ENCODE measurements at regions of chr20 and their contacts with region 1.

Region 1: DNA sequence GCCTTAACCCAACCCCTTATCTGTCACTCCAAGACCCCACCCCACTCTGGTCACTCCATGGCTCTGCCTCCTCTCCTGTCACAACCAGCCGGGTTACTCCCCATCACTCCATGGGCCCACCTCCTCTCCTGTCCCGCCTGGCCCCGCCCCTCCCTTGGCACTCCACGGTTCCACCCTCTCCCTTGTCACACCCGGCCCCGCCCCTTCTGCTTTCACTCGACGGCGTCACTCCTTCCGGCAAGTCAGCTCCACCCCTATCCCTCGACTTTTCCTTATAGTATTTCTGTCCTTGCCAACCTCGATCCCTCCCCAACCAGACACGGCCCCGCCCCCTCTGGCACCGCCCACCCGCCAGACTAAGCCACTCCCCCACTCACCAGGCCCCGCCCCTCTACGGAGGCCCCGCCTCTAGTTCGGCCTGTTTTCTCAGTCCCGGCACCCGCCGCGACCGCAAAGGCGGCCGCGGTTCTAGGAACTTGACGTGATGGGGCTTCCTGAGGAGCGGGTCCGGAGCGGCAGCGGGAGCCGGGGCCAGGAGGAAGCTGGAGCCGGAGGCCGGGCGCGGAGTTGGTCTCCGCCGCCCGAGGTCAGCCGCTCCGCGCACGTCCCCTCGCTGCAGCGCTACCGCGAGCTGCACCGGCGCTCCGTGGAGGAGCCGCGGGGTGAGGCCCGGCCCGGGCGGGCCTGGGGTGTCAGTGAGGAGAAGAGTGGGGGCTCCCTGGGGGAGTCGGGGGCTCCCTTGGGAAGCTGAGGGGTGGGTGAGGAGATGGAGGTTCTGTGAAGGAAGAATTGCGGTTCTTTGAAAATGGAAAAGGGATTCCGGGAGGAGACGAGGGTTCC is at the start of gene ACSS2:
- DNase-seq: peak; percentile 98 to 100
- H3K4me3 ChIP-seq: peak within 1 kb of the TSS; percentile 54 to 87
- H3K27ac ChIP-seq: peak within 1 kb of the TSS; percentile 83 to 84
- H3K4me1 ChIP-seq: peaks cover 0 to 5% of the 10 kb centered on the region in 2 donors
- H3K27me3 ChIP-seq: no peaks in the 10 kb centered on the region
- CTCF ChIP-seq: peak in 2 of 4 experiments; percentile 22 to 33
- POLR2A ChIP-seq: peak; percentile 77 to 96
- total RNA-seq, gene ACSS2: 18.8 to 138 (median 48.7) TPM

Region 2: DNA sequence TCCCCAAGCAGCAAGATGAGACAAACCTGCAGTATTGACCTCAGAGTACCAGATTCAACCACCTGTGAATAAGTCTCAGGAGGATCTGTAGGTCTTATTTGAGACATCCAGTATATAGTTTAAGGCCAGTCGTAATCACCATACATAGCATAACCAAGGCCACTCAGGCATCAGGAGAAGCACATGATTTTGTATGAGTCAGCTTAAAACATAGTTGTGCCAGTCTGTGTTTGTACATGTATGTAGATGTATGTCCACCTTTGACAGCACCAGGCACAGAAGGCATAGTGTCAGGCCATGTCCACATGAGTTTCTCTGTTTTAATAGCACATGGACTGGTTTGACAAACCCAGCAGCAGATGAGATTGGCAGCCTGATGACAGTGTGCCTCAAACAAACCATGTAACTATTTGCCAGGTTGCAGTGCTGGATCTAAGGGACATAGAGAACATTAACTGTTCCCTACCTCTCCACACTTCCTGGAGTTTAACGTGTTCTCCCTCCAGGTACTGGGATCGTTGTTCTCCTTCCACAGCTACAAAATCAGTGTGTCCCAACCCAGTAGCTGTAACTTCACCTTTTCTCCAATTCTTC is 643.8 kb before region 1 on chr20:
- intact Hi-C with region 1: no loop called
- DNase-seq: no peak
- H3K4me3 ChIP-seq: no peak overlapping the region
- H3K27ac ChIP-seq: no peak overlapping the region
- H3K4me1 ChIP-seq: no peaks in the 10 kb centered on the region
- H3K27me3 ChIP-seq: no peaks in the 10 kb centered on the region
- CTCF ChIP-seq: no peak
- POLR2A ChIP-seq: no peak

Region 3: GRCh38 chr20:34955232-34956040 is 79.1 kb after region 1 on chr20 and contains the starts of genes GSS and MYH7B:
- intact Hi-C with region 1: loop called (anchors 5 kb)
- DNase-seq: peak; percentile 97 to 99
- H3K4me3 ChIP-seq: peak within 1 kb of the TSS; percentile 64 to 84
- H3K27ac ChIP-seq: peak within 1 kb of the TSS; percentile 91 to 92
- H3K4me1 ChIP-seq: no peaks in the 10 kb centered on the region
- H3K27me3 ChIP-seq: no peaks in the 10 kb centered on the region
- CTCF ChIP-seq: peak; percentile 44 to 72 (median 60)
- POLR2A ChIP-seq: peak; percentile 82
- total RNA-seq, gene GSS: 3.8 to 47.2 (median 16.5) TPM
- total RNA-seq, gene MYH7B: 0.41 to 3.0 (median 0.51) TPM in 3 of 4 donors, not detected in the other

Region 4: GRCh38 chr20:35092524-35093266 is 216.3 kb after region 1 on chr20 and contains the start of gene TRPC4AP:
- intact Hi-C with region 1: loop called (anchors 10 kb)
- DNase-seq: peak; percentile 85 to 91
- H3K4me3 ChIP-seq: peak within 1 kb of the TSS; percentile 76
- H3K27ac ChIP-seq: peak within 1 kb of the TSS; percentile 86 to 89
- H3K4me1 ChIP-seq: peaks cover 0 to 5% of the 10 kb centered on the region in 2 donors
- H3K27me3 ChIP-seq: no peaks in the 10 kb centered on the region
- CTCF ChIP-seq: peak; percentile 94 to 99 (median 98)
- POLR2A ChIP-seq: peak; percentile 63 to 78
- total RNA-seq, gene TRPC4AP: 20.0 to 77.5 (median 49.6) TPM

Measured in uterus (tissue), 4 donors.